ENCODE measurements at regions of chr1 and their contacts with region 1.

Region 1: GRCh38 chr1:150925816-150926741 is at the start of gene SETDB1:
- DNase-seq: peak; percentile 85 to 98 (median 90)

Region 2: GRCh38 chr1:150876119-150876454 is 50.0 kb before region 1 on chr1:
- intact Hi-C with region 1: loop called (anchors 5 kb)
- DNase-seq: peak in 6 of 10 donors; percentile 45 to 90 (median 50)

Region 3: DNA sequence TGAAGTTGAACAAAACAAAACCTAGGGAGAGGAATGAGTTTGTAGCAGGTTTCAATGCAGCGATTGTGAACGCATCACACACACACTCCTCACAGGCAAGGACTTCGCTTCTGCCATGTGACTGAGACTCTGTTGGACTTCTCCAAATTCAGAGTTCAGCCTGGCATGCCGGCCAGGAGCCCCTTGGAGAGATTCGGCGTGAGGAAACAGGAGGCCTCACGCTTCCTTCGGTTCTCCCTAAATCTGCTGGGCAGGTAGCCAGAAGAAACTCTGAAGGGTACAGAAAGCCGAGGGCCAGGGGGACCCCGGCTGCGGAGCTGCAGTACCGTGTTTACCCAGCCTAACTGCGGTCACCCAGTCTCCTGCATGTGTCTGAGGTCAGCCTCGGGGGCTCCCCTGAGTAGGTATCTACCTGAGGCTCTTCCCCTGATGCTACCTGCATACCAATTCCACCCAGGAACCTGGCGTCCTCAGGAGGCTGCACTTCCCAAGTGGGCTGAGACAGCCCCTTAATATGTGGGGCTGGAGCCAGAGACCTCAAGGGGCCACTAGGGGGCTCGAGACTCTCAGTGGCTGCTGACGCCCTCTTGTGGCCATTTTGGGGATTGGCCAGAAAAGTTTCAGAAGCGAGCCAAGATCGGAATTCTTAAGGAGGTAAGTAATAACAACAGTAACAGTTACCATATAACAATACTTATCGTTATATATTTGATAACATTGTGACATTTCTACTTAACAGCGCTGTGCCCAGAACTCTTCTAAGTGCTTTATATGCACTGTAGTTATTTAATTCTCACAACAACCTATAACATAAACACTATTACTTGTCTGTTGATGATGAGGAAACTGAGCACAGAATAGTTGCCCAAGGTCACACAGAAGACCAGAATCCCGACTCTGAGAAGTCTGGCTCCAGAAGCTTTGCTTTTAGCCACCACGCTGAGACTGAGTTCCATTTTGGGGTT is 53.3 kb after region 1 on chr1:
- intact Hi-C with region 1: loop called (anchors 5 kb)
- DNase-seq: peak; percentile 58 to 95 (median 86)

Region 4: GRCh38 chr1:150995896-150996295 is 69.8 kb after region 1 on chr1:
- intact Hi-C with region 1: loop called (anchors 5 kb)
- DNase-seq: peak in 5 of 10 donors; percentile 37 to 89 (median 46)

Region 5: DNA sequence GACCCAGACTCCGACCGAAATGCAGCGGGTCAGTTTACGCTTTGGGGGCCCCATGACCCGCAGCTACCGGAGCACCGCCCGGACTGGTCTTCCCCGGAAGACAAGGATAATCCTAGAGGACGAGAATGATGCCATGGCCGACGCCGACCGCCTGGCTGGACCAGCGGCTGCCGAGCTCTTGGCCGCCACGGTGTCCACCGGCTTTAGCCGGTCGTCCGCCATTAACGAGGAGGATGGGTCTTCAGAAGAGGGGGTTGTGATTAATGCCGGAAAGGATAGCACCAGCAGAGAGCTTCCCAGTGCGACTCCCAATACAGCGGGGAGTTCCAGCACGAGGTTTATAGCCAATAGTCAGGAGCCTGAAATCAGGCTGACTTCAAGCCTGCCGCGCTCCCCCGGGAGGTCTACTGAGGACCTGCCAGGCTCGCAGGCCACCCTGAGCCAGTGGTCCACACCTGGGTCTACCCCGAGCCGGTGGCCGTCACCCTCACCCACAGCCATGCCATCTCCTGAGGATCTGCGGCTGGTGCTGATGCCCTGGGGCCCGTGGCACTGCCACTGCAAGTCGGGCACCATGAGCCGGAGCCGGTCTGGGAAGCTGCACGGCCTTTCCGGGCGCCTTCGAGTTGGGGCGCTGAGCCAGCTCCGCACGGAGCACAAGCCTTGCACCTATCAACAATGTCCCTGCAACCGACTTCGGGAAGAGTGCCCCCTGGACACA is 122.0 kb after region 1 on chr1:
- intact Hi-C with region 1: loop called (anchors 5 kb)
- DNase-seq: peak; percentile 53 to 95 (median 67)